Naive thymus-derived CD4-positive, alpha-beta T cell (primary cell): ENCODE measurements at regions of chr22 and their contacts with region 1.

Region 1: GRCh38 chr22:25702040-25702439 is 39.9 kb upstream of the MYO18B start:
- DNase-seq: peak in 1 of 9 donors; percentile 18
- ATAC-seq: no peak
- H3K4me3 ChIP-seq: no peak overlapping the region
- H3K4me3 Mint-ChIP-seq: peak overlapping the region in 1 of 10 donors; percentile 79
- H3K27ac ChIP-seq: no peak overlapping the region
- H3K27ac Mint-ChIP-seq: peak overlapping the region in 1 of 9 donors; percentile 94
- H3K4me1 ChIP-seq: no peaks in the 10 kb centered on the region
- H3K4me1 Mint-ChIP-seq: peaks cover 0 to 64% (median 0%) of the 10 kb centered on the region in 7 donors
- H3K27me3 ChIP-seq: no peaks in the 10 kb centered on the region
- H3K27me3 Mint-ChIP-seq: no peaks in the 10 kb centered on the region

Region 2: DNA sequence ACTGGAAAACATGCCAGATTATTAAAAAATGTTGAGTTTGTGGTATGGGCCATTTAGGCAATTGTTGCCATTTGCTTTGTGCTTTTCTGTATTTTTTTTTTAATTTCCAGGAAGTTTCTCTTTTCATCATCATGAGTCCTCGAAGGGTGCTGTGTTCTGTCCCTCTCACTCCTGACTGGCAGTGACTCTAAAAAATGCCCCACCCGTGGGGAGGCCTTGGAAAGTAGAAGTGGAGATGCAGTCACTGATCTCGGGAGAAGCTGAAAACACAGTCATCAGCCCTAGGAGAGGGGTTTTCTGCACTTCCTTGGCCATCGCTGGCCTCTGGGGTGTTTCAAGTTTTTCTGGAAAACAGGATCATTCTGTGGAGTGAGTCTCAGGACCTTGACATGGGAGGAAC is 236.1 kb before region 1 on chr22:
- CTCF ChIA-PET with region 1: interaction called, 15 read pairs
- POLR2A ChIA-PET with region 1: no interaction called
- intact Hi-C with region 1: loop called (anchors 1 kb)
- DNase-seq: no peak
- ATAC-seq: no peak
- H3K4me3 ChIP-seq: no peak overlapping the region
- H3K4me3 Mint-ChIP-seq: no peak overlapping the region
- H3K27ac ChIP-seq: no peak overlapping the region
- H3K27ac Mint-ChIP-seq: peak overlapping the region in 1 of 9 donors; percentile 24
- H3K4me1 ChIP-seq: no peaks in the 10 kb centered on the region
- H3K4me1 Mint-ChIP-seq: peaks cover 0 to 16% (median 4%) of the 10 kb centered on the region in 7 donors
- H3K27me3 ChIP-seq: no peaks in the 10 kb centered on the region
- H3K27me3 Mint-ChIP-seq: no peaks in the 10 kb centered on the region

Region 3: GRCh38 chr22:25540166-25540907 is 161.7 kb before region 1 on chr22:
- CTCF ChIA-PET with region 1: no interaction called
- POLR2A ChIA-PET with region 1: no interaction called
- intact Hi-C with region 1: loop called in 1 of 2 experiments (anchors 5 kb)
- DNase-seq: no peak
- ATAC-seq: no peak
- H3K4me3 ChIP-seq: no peak overlapping the region
- H3K4me3 Mint-ChIP-seq: no peak overlapping the region
- H3K27ac ChIP-seq: no peak overlapping the region
- H3K27ac Mint-ChIP-seq: no peak overlapping the region
- H3K4me1 ChIP-seq: no peaks in the 10 kb centered on the region
- H3K4me1 Mint-ChIP-seq: peaks cover 0 to 12% (median 0%) of the 10 kb centered on the region in 7 donors
- H3K27me3 ChIP-seq: no peaks in the 10 kb centered on the region
- H3K27me3 Mint-ChIP-seq: peaks cover 0 to 13% (median 6%) of the 10 kb centered on the region in 5 donors

Region 4: DNA sequence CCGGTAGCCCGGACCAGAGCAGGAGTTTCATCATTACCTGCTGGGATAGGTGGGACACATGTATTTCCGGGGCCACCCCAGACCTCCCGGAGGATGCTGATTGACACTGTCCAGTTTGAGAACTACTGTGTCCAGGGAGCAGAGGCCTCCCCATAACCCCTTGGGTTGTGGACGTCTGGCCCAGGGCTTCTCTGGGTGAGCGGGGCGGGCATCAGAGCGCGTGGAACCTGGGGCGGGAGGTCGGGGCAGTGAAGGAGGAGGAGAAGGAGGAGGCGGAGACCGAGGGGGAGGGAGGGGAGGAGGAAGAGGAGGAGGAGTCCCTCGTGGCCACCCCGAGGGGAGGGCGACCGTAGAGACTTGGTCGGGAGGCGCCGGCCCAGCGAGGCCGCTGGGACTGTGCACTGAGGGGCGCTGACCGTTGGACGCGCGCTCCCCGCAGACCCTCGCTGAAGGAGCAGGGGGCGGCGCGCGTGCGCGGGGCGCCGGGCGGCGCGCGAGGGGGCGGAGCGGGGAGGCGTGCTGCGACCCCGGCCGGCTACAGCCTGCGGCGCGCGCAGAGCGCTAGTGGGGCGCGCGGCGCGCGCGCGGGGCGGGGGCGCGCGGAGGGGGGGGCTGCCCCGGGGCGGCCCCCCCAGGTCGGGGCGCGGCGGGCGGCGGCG is 137.6 kb before region 1 on chr22 and contains the start of gene GRK3:
- CTCF ChIA-PET with region 1: no interaction called
- POLR2A ChIA-PET with region 1: no interaction called
- intact Hi-C with region 1: loop called in 1 of 2 experiments (anchors 2 kb)
- DNase-seq: peak; percentile 30 to 73 (median 55)
- ATAC-seq: peak; percentile 74
- H3K4me3 ChIP-seq: peak within 1 kb of the TSS; percentile 57
- H3K4me3 Mint-ChIP-seq: peak within 1 kb of the TSS; percentile 89 to 99 (median 96)
- H3K27ac ChIP-seq: peak within 1 kb of the TSS; percentile 55
- H3K27ac Mint-ChIP-seq: peak within 1 kb of the TSS; percentile 29 to 94 (median 79)
- H3K4me1 ChIP-seq: peaks cover 4 to 11% of the 10 kb centered on the region in 2 donors
- H3K4me1 Mint-ChIP-seq: peaks cover 18 to 56% (median 38%) of the 10 kb centered on the region in 7 donors
- H3K27me3 ChIP-seq: no peaks in the 10 kb centered on the region
- H3K27me3 Mint-ChIP-seq: peaks cover 0 to 20% (median 0%) of the 10 kb centered on the region in 5 donors
- total RNA-seq, gene GRK3: 5.6 to 44.8 (median 6.5) TPM

Region 5: DNA sequence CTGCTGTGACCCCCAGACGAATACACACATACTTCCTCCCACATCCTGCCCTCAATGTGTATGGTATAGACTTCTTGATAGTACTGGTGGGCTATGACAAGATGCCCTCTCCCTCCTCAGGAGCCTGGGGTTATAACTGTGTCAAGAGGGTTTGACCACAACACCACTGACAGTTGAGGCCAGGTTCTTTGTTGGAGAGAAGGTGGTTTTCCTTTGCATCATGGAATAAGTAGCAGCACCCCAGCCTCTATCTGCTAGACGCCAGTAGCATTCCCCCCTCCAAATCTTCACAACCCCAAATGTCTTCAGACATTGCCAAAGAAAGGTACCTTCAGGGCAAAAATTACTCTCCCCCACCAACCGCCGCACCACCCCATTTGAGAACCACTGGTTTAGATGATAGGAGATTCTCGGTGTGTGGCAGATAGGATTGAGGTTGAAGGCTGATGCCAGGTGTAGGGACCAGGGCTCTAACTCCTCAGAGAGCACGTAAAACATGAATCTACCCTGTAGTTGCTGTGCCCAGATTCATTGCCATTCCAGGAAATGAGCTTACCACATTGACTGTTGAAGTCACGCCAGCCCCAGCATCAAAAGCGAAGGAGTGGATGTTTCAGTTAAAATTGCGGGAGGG is 34.5 kb after region 1 on chr22:
- CTCF ChIA-PET with region 1: no interaction called
- POLR2A ChIA-PET with region 1: no interaction called
- intact Hi-C with region 1: loop called in 1 of 2 experiments (anchors 2 kb)
- DNase-seq: peak in 7 of 9 donors; percentile 48 to 66 (median 57)
- ATAC-seq: peak; percentile 36
- H3K4me3 ChIP-seq: peak overlapping the region; percentile 31
- H3K4me3 Mint-ChIP-seq: peak overlapping the region; percentile 47 to 81 (median 70)
- H3K27ac ChIP-seq: no peak overlapping the region
- H3K27ac Mint-ChIP-seq: peak overlapping the region; percentile 51 to 98 (median 84)
- H3K4me1 ChIP-seq: peaks cover 0 to 13% of the 10 kb centered on the region in 2 donors
- H3K4me1 Mint-ChIP-seq: peaks cover 7 to 64% (median 21%) of the 10 kb centered on the region in 7 donors
- H3K27me3 ChIP-seq: no peaks in the 10 kb centered on the region
- H3K27me3 Mint-ChIP-seq: no peaks in the 10 kb centered on the region

Region 6: DNA sequence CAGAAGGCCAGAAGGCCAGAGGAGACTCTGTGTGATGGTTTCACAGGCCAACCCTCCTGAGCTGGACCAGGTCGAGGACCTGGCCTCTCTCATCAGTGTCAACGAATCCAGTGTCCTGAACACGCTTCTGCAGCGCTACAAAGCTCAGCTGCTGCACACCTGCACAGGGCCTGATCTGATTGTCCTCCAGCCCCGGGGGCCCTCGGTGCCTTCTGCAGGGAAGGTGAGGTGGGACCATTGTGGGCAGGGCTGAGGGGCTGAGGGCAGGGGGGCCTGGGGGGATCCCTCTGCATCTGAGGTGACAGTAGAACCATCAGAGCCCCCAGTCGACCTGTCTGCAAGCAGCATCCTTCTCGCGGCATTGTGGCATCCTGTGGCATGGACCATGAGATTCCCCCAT is 70.2 kb after region 1 on chr22:
- CTCF ChIA-PET with region 1: no interaction called
- POLR2A ChIA-PET with region 1: no interaction called
- intact Hi-C with region 1: loop called (anchors 1 to 2 kb)
- DNase-seq: no peak
- ATAC-seq: no peak
- H3K4me3 ChIP-seq: no peak overlapping the region
- H3K4me3 Mint-ChIP-seq: peak overlapping the region in 1 of 10 donors; percentile 58
- H3K27ac ChIP-seq: no peak overlapping the region
- H3K27ac Mint-ChIP-seq: peak overlapping the region in 2 of 9 donors; percentile 14 to 89
- H3K4me1 ChIP-seq: no peaks in the 10 kb centered on the region
- H3K4me1 Mint-ChIP-seq: peaks cover 0 to 55% (median 5%) of the 10 kb centered on the region in 7 donors
- H3K27me3 ChIP-seq: no peaks in the 10 kb centered on the region
- H3K27me3 Mint-ChIP-seq: peaks cover 0 to 10% (median 4%) of the 10 kb centered on the region in 5 donors

Region 7: DNA sequence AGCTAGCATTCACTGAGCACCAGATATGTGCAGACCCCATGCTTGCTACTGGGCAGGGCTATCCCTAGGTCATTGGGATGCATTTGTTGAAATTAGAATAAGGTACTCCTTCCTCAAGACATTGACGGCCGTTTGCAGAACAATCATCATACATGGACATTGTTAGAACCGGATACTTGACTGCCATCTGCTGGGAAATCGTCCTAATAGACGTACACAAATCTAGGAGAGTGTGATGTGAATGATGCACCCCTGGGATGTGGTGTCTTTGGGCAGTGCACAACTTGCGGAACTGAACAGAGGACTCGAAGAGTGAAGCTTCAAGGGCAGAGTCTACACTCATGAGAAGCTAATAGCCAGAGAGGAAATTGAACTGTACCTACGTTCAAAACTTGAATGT is 75.8 kb after region 1 on chr22:
- CTCF ChIA-PET with region 1: no interaction called
- POLR2A ChIA-PET with region 1: no interaction called
- intact Hi-C with region 1: loop called (anchors 1 to 2 kb)
- DNase-seq: no peak
- ATAC-seq: no peak
- H3K4me3 ChIP-seq: no peak overlapping the region
- H3K4me3 Mint-ChIP-seq: no peak overlapping the region
- H3K27ac ChIP-seq: no peak overlapping the region
- H3K27ac Mint-ChIP-seq: no peak overlapping the region
- H3K4me1 ChIP-seq: no peaks in the 10 kb centered on the region
- H3K4me1 Mint-ChIP-seq: peaks cover 0 to 15% (median 3%) of the 10 kb centered on the region in 7 donors
- H3K27me3 ChIP-seq: no peaks in the 10 kb centered on the region
- H3K27me3 Mint-ChIP-seq: peaks cover 0 to 9% (median 4%) of the 10 kb centered on the region in 5 donors

Region 8: GRCh38 chr22:25837288-25837900 is 135.4 kb after region 1 on chr22:
- CTCF ChIA-PET with region 1: no interaction called
- POLR2A ChIA-PET with region 1: no interaction called
- intact Hi-C with region 1: no loop called
- DNase-seq: no peak
- ATAC-seq: no peak
- H3K4me3 ChIP-seq: no peak overlapping the region
- H3K4me3 Mint-ChIP-seq: no peak overlapping the region
- H3K27ac ChIP-seq: no peak overlapping the region
- H3K27ac Mint-ChIP-seq: no peak overlapping the region
- H3K4me1 ChIP-seq: no peaks in the 10 kb centered on the region
- H3K4me1 Mint-ChIP-seq: no peaks in the 10 kb centered on the region
- H3K27me3 ChIP-seq: no peaks in the 10 kb centered on the region
- H3K27me3 Mint-ChIP-seq: peaks cover 0 to 33% (median 15%) of the 10 kb centered on the region in 5 donors